Activated CD4-positive, alpha-beta memory T cell treated with anti-CD3 and anti-CD28 coated beads, Interleukin-2, amount 10 ng/mL, durations not matched to agents 7 days and 5 days (primary cell): ENCODE measurements at regions of chr11 and their contacts with region 1.

Region 1: GRCh38 chr11:10091314-10092045 is 202.5 kb downstream of the SBF2 start:
- DNase-seq: no peak
- H3K4me3 Mint-ChIP-seq: no peak overlapping the region
- H3K27ac Mint-ChIP-seq: no peak overlapping the region
- H3K4me1 Mint-ChIP-seq: peaks cover 17% of the 10 kb centered on the region
- H3K27me3 Mint-ChIP-seq: no peaks in the 10 kb centered on the region

Region 2: GRCh38 chr11:10002221-10002620 is 89.3 kb before region 1 on chr11:
- CTCF ChIA-PET with region 1: no interaction called
- POLR2A ChIA-PET with region 1: no interaction called
- DNase-seq: no peak
- H3K4me3 Mint-ChIP-seq: no peak overlapping the region
- H3K27ac Mint-ChIP-seq: no peak overlapping the region
- H3K4me1 Mint-ChIP-seq: no peaks in the 10 kb centered on the region
- H3K27me3 Mint-ChIP-seq: no peaks in the 10 kb centered on the region

Region 3: GRCh38 chr11:10076458-10077141 is 14.9 kb before region 1 on chr11:
- CTCF ChIA-PET with region 1: interaction called, 10 read pairs
- POLR2A ChIA-PET with region 1: no interaction called
- DNase-seq: peak; percentile 39
- H3K4me3 Mint-ChIP-seq: no peak overlapping the region
- H3K27ac Mint-ChIP-seq: no peak overlapping the region
- H3K4me1 Mint-ChIP-seq: no peaks in the 10 kb centered on the region
- H3K27me3 Mint-ChIP-seq: no peaks in the 10 kb centered on the region

Region 4: DNA sequence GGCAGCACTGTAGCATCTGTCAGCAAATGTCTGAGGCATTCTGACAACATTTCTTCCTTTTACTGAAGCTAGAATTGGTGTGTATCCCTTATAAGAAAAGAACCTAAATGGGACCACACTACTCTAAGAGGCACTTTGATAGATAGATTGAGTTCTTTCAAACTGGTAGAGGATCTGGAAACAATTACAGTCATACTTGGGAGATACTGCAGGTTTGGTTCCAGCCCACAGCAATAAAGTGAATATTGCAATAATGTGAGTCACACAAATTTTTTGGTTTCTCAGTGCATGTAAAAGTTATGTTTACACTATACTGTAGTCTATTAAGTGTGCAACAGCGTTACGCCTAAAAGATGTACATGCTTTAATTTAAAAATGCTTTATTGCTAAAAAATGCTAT is 105.6 kb after region 1 on chr11:
- CTCF ChIA-PET with region 1: no interaction called
- POLR2A ChIA-PET with region 1: no interaction called
- DNase-seq: no peak
- H3K4me3 Mint-ChIP-seq: no peak overlapping the region
- H3K27ac Mint-ChIP-seq: no peak overlapping the region
- H3K4me1 Mint-ChIP-seq: no peaks in the 10 kb centered on the region
- H3K27me3 Mint-ChIP-seq: no peaks in the 10 kb centered on the region